Activated B cell treated with CpG ODN at 0.5 μM for 24 hours (primary cell): ENCODE measurements at regions of chr7 and their contacts with region 1.

Region 1: GRCh38 chr7:92528188-92528957 is at the starts of genes PEX1 and RBM48:
- DNase-seq: peak; percentile 80
- ATAC-seq: peak; percentile 92
- H3K4me3 Mint-ChIP-seq: peak within 1 kb of the TSS; percentile 89
- H3K27ac Mint-ChIP-seq: peak within 1 kb of the TSS; percentile 93
- H3K4me1 Mint-ChIP-seq: peaks cover 24% of the 10 kb centered on the region
- H3K27me3 Mint-ChIP-seq: no peaks in the 10 kb centered on the region
- CTCF ChIP-seq: no peak
- total RNA-seq, gene PEX1: 18.2 and 21.8 TPM in 2 replicates
- total RNA-seq, gene RBM48: 21.6 and 24.3 TPM in 2 replicates

Region 2: GRCh38 chr7:91940572-91941341 is 587.6 kb before region 1 on chr7 and contains the start of gene AKAP9:
- CTCF ChIA-PET with region 1: no interaction called
- POLR2A ChIA-PET with region 1: interaction called, 4 read pairs
- intact Hi-C with region 1: loop called (anchors 1 kb)
- DNase-seq: peak; percentile 85
- ATAC-seq: peak; percentile 91
- H3K4me3 Mint-ChIP-seq: peak within 1 kb of the TSS; percentile 94
- H3K27ac Mint-ChIP-seq: peak within 1 kb of the TSS; percentile 93
- H3K4me1 Mint-ChIP-seq: peaks cover 42% of the 10 kb centered on the region
- H3K27me3 Mint-ChIP-seq: no peaks in the 10 kb centered on the region
- CTCF ChIP-seq: no peak
- total RNA-seq, gene AKAP9: 54.4 and 58.4 TPM in 2 replicates

Region 3: GRCh38 chr7:92245487-92246362 is 282.6 kb before region 1 on chr7 and contains the starts of genes ANKIB1 and KRIT1:
- CTCF ChIA-PET with region 1: no interaction called
- POLR2A ChIA-PET with region 1: interaction called, 14 read pairs
- intact Hi-C with region 1: loop called (anchors 1 kb)
- DNase-seq: peak; percentile 79
- ATAC-seq: peak; percentile 84
- H3K4me3 Mint-ChIP-seq: peak within 1 kb of the TSS; percentile 100
- H3K27ac Mint-ChIP-seq: peak within 1 kb of the TSS; percentile 99
- H3K4me1 Mint-ChIP-seq: peaks cover 40% of the 10 kb centered on the region
- H3K27me3 Mint-ChIP-seq: no peaks in the 10 kb centered on the region
- CTCF ChIP-seq: no peak
- total RNA-seq, gene ANKIB1: 42.5 and 50.6 TPM in 2 replicates
- total RNA-seq, gene KRIT1: 53.4 and 61.1 TPM in 2 replicates

Region 4: DNA sequence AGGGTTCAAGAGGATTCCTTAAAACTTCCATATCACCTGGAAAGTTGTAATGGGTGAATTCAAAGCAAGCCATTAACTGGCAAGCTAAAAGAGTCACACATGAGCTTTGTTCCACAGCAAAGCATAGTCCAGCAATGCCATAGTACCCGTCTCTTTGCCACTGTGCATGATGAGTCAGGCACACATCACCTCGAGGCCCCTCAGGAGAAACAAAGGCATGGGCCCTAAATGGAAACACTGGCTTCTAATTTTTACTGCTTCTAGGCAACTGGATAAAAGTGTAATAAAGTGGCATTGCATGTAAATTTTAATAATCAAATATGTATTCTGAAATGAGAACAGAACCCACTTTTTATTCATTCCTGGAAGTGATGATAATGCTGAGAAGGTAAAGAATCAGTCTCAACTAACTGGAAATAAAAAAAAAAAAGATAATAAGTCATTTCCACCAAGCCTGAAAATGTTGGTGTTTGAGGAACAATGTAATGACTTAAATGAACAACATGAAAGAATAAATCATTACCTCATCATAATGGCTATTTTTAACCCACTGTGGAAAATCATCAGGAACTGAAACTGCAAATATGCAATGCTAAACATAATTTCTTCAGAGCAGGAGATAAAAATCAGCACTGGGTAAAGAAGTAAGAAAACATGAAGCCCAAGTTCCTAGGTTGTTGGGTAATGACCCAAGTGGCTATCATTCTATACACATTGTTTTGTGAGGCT is 203.1 kb after region 1 on chr7:
- CTCF ChIA-PET with region 1: no interaction called
- POLR2A ChIA-PET with region 1: no interaction called
- intact Hi-C with region 1: loop called (anchors 5 kb)
- DNase-seq: no peak
- ATAC-seq: peak; percentile 67
- H3K4me3 Mint-ChIP-seq: peak overlapping the region; percentile 29
- H3K27ac Mint-ChIP-seq: peak overlapping the region; percentile 64
- H3K4me1 Mint-ChIP-seq: peaks cover 29% of the 10 kb centered on the region
- H3K27me3 Mint-ChIP-seq: no peaks in the 10 kb centered on the region
- CTCF ChIP-seq: no peak

Region 5: DNA sequence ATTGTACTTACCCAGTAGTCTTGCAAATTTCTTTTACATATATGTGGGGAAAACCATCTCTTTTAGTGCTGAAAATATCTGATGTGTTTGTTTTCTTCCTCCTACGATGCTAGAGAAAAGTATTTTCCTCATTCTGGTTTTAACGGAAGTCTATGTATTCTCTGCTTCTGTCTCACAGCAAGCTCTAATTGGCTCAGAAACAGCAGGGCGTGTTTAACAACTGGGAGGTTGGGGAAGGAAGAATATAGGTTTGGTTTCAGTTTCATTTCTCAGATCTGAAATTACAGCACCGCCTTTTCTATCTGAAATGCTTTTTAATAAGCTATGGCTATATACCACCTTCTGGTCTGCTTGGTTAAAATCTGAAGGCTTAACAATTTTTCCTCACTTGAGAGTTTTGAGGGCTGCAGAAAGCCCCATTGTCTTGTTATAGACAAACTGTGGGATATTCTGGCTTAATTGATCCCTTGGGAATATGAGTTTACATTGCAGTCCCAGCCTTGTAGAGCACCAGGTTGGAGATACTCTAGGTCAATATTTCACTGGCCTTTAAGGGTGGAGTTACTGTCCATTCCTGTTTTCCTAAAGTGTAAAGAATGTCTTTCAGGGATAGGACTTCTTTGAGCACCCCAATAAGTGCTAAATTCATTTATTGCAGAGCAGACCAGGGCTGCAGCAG is 589.6 kb after region 1 on chr7 and contains the start of gene SAMD9:
- CTCF ChIA-PET with region 1: interaction called, 3 read pairs
- POLR2A ChIA-PET with region 1: interaction called, 6 read pairs
- intact Hi-C with region 1: loop called (anchors 1 kb)
- DNase-seq: no peak
- ATAC-seq: peak; percentile 99
- H3K4me3 Mint-ChIP-seq: peak within 1 kb of the TSS; percentile 79
- H3K27ac Mint-ChIP-seq: peak within 1 kb of the TSS; percentile 74
- H3K4me1 Mint-ChIP-seq: peaks cover 46% of the 10 kb centered on the region
- H3K27me3 Mint-ChIP-seq: no peaks in the 10 kb centered on the region
- CTCF ChIP-seq: no peak
- total RNA-seq, gene SAMD9: 24.4 and 26.3 TPM in 2 replicates

Region 6: DNA sequence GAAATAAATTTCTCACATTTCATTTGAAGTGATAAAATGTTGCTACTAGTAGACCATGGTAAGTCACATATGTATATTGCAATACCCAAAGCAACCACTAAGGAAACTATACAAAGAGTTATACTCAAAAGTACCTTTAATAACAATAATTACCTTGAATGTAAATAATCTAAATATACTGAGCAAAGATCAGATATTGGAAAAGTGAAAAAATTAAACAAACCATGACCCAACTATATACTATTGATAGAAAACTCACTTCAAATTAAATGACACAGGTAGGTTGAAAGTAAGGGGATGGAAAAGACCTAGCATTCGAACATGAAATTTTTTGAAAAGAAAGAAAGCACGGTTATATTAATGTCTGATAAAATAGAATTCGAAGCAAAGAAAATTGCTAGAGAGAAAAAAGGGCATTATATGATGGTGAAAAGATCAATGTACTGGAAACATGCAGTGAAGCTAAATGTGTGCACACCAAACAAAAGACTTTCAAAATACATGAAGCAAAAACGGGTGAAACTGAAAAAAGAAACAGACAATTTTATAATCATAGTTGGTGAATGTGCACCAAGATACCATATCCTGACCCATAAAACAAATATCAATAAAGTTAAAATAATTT is 1333.1 kb after region 1 on chr7:
- CTCF ChIA-PET with region 1: no interaction called
- POLR2A ChIA-PET with region 1: no interaction called
- intact Hi-C with region 1: no loop called
- DNase-seq: no peak
- ATAC-seq: no peak
- H3K4me3 Mint-ChIP-seq: no peak overlapping the region
- H3K27ac Mint-ChIP-seq: no peak overlapping the region
- H3K4me1 Mint-ChIP-seq: no peaks in the 10 kb centered on the region
- H3K27me3 Mint-ChIP-seq: peaks cover 6% of the 10 kb centered on the region
- CTCF ChIP-seq: no peak

Region 7: GRCh38 chr7:94160719-94161435 is 1632.5 kb after region 1 on chr7:
- CTCF ChIA-PET with region 1: no interaction called
- POLR2A ChIA-PET with region 1: no interaction called
- intact Hi-C with region 1: loop called (anchors 5 kb)
- DNase-seq: no peak
- ATAC-seq: peak; percentile 79
- H3K4me3 Mint-ChIP-seq: peak overlapping the region; percentile 78
- H3K27ac Mint-ChIP-seq: peak overlapping the region; percentile 89
- H3K4me1 Mint-ChIP-seq: peaks cover 41% of the 10 kb centered on the region
- H3K27me3 Mint-ChIP-seq: no peaks in the 10 kb centered on the region
- CTCF ChIP-seq: no peak